Activated naive CD4-positive, alpha-beta T cell treated with anti-CD3 and anti-CD28 coated beads for 36 hours (primary cell): ENCODE measurements at regions of chr1 and their contacts with region 1.

Region 1: GRCh38 chr1:63442141-63442475 is 74.7 kb downstream of the ALG6 start:
- DNase-seq: no peak
- H3K4me3 Mint-ChIP-seq: no peak overlapping the region
- H3K27ac Mint-ChIP-seq: no peak overlapping the region
- H3K4me1 Mint-ChIP-seq: no peaks in the 10 kb centered on the region
- H3K27me3 Mint-ChIP-seq: no peaks in the 10 kb centered on the region

Region 2: DNA sequence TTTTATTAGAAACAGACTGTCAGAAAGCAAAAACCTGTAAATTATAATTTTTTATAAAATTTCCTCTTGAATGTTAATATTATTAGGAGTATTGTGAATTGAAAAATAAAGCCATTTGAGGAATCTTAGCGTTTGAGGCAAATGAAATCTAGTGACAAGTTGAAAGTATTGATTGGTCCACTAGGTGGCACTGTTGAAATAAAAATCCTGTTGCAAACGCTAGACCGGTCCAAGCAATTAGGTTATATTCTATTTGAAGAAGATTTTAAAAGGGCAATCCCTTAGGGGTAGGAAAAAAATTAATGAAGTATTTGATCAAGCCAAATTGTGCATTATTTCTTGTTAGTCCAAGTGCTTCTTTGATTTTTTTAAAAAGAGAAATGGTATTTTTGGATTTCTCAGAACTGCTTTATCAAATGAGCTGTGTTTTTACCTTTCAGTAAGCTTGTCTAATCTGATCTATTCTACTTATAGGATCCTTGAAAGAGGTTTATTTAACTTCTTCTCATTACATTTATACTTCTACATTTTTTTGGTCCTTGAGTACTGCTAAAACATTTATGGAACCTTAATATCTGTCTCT is 600.4 kb before region 1 on chr1:
- CTCF ChIA-PET with region 1: interaction called, 4 read pairs
- intact Hi-C with region 1: loop called (anchors 1 kb)
- DNase-seq: peak; percentile 7
- H3K4me3 Mint-ChIP-seq: no peak overlapping the region
- H3K27ac Mint-ChIP-seq: no peak overlapping the region
- H3K4me1 Mint-ChIP-seq: no peaks in the 10 kb centered on the region
- H3K27me3 Mint-ChIP-seq: no peaks in the 10 kb centered on the region

Region 3: GRCh38 chr1:62962901-62963776 is 479.0 kb before region 1 on chr1:
- CTCF ChIA-PET with region 1: no interaction called
- intact Hi-C with region 1: loop called (anchors 1 kb)
- DNase-seq: peak; percentile 49
- H3K4me3 Mint-ChIP-seq: no peak overlapping the region
- H3K27ac Mint-ChIP-seq: no peak overlapping the region
- H3K4me1 Mint-ChIP-seq: no peaks in the 10 kb centered on the region
- H3K27me3 Mint-ChIP-seq: peaks cover 16% of the 10 kb centered on the region

Region 4: GRCh38 chr1:63189677-63190076 is 252.4 kb before region 1 on chr1:
- CTCF ChIA-PET with region 1: no interaction called
- intact Hi-C with region 1: loop called (anchors 10 kb)
- DNase-seq: peak; percentile 15
- H3K4me3 Mint-ChIP-seq: no peak overlapping the region
- H3K27ac Mint-ChIP-seq: no peak overlapping the region
- H3K4me1 Mint-ChIP-seq: no peaks in the 10 kb centered on the region
- H3K27me3 Mint-ChIP-seq: peaks cover 5% of the 10 kb centered on the region

Region 5: DNA sequence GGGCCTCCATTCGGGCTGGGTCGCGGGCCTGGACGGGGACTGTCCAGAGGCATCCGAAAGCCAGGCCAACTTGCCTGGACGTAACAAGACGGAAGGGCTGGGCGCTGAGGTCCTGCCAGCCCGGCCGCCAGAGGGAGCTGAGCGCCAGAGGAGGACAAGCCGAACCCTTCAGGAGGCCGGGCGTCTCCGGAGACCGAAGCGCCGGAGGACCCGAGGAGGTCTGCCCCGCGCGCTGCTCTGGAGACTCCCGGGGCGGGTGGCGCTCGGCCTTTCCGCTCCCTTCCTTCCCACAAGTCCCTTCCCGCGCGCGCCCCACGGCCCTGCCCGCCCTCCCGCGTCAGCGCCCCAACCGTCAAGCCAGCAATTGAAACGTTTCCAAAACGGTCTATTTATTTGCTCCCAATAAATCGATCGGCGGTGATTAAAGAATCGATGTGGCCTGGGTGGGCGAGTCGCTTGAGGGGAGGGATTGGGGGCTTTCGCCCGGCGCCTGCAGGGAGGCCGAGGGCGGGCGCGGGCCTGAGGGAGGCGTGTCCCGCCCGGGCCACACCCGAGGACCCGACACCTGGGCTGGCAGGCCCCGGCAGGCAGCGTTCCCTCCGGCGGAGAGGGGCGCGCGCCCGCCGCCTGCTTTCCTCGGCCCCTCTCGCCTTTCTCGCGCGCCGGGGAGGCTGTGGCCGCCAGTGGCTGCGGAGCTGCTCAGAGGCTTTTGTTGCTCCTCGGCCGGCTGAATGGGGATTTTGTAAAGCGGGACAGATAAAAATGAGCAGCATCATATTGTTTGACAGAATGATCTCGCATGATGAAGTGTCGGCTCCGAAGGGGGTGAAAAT is 124.9 kb before region 1 on chr1:
- CTCF ChIA-PET with region 1: no interaction called
- intact Hi-C with region 1: loop called (anchors 1 kb)
- DNase-seq: peak; percentile 67
- H3K4me3 Mint-ChIP-seq: peak overlapping the region; percentile 63
- H3K27ac Mint-ChIP-seq: no peak overlapping the region
- H3K4me1 Mint-ChIP-seq: peaks cover 38% of the 10 kb centered on the region
- H3K27me3 Mint-ChIP-seq: peaks cover 69% of the 10 kb centered on the region

Region 6: GRCh38 chr1:63367215-63368103 is 74.6 kb before region 1 on chr1 and contains the start of gene ALG6:
- CTCF ChIA-PET with region 1: no interaction called
- intact Hi-C with region 1: loop called (anchors 5 kb)
- DNase-seq: peak; percentile 91
- H3K4me3 Mint-ChIP-seq: peak within 1 kb of the TSS; percentile 83
- H3K27ac Mint-ChIP-seq: peak within 1 kb of the TSS; percentile 65
- H3K4me1 Mint-ChIP-seq: peaks cover 21% of the 10 kb centered on the region
- H3K27me3 Mint-ChIP-seq: peaks cover 3% of the 10 kb centered on the region
- total RNA-seq, gene ALG6: 11.0 to 13.5 TPM

Region 7: DNA sequence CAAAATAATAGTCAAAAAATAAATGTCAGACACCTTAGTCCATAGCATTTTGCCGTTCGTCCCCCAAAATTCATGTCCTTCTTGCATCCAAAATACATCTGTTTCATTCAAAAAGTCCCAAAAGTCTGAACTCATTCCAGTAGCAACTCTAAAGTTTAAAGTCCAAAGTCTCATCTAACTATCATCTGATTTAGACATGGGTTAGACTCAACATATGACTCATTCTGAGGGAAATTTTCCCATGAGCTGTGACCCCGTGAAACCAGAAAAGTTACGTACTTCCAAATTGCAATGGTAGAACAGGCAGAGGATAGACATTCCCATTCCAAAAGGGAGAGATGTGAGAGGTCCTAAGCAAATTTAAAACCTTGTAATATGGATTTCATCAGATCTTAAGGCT is 979.3 kb after region 1 on chr1:
- CTCF ChIA-PET with region 1: no interaction called
- intact Hi-C with region 1: no loop called
- DNase-seq: no peak
- H3K4me3 Mint-ChIP-seq: no peak overlapping the region
- H3K27ac Mint-ChIP-seq: no peak overlapping the region
- H3K4me1 Mint-ChIP-seq: peaks cover 9% of the 10 kb centered on the region
- H3K27me3 Mint-ChIP-seq: no peaks in the 10 kb centered on the region